ENCODE measurements at regions of chr15 and their contacts with region 1.

Region 1: DNA sequence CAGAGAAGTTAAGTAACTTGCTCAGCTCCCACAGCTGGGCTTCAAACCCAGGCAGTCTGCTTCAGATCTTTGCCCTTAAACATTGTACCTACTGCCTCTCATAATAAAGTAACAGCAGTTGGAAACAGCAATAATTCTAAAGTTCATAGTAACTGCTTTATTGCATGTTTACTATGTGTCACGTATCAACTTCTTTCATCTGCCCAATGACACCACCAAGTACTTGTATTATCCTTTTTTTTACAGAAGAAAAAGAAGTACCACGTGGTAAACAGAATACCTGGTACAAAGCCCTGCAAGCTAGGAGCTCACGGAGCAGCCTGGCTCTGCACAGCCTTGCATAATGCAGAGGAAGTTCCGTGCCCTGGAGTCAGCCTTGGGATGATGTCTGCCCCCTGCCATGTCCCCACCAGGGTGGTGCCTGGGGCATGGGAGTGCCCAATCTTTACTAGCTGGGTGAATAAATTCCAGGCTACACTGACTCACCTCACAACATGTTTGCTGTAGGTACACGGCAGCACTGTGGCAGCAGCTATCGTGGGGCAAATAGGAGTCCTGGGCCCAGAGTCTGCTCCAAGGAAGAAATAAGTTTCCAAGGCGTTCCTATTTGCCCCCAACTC is 77.2 kb downstream of the LDHAL6B start:
- DNase-seq: peak; percentile 96
- H3K4me3 Mint-ChIP-seq: peak overlapping the region; percentile 49
- H3K27ac Mint-ChIP-seq: peak overlapping the region; percentile 97
- H3K4me1 Mint-ChIP-seq: peaks cover 34% of the 10 kb centered on the region
- H3K27me3 Mint-ChIP-seq: no peaks in the 10 kb centered on the region
- CTCF ChIP-seq: no peak

Region 2: GRCh38 chr15:59169251-59169708 is 114.5 kb before region 1 on chr15:
- CTCF ChIA-PET with region 1: interaction called, 4 read pairs
- POLR2A ChIA-PET with region 1: interaction called, 12 read pairs
- intact Hi-C with region 1: no loop called
- DNase-seq: peak; percentile 76
- H3K4me3 Mint-ChIP-seq: peak overlapping the region; percentile 10
- H3K27ac Mint-ChIP-seq: peak overlapping the region; percentile 98
- H3K4me1 Mint-ChIP-seq: peaks cover 51% of the 10 kb centered on the region
- H3K27me3 Mint-ChIP-seq: no peaks in the 10 kb centered on the region
- CTCF ChIP-seq: no peak

Region 3: GRCh38 chr15:59268168-59268979 is 15.5 kb before region 1 on chr15:
- CTCF ChIA-PET with region 1: interaction called, 3 read pairs
- POLR2A ChIA-PET with region 1: interaction called, 12 read pairs
- intact Hi-C with region 1: no loop called
- DNase-seq: peak; percentile 39
- H3K4me3 Mint-ChIP-seq: no peak overlapping the region
- H3K27ac Mint-ChIP-seq: peak overlapping the region; percentile 63
- H3K4me1 Mint-ChIP-seq: peaks cover 19% of the 10 kb centered on the region
- H3K27me3 Mint-ChIP-seq: no peaks in the 10 kb centered on the region
- CTCF ChIP-seq: no peak

Region 4: GRCh38 chr15:59299929-59300617 is 16.2 kb after region 1 on chr15:
- CTCF ChIA-PET with region 1: interaction called, 26 read pairs
- POLR2A ChIA-PET with region 1: interaction called, 120 read pairs
- intact Hi-C with region 1: loop called (anchors 1 kb)
- DNase-seq: peak; percentile 99
- H3K4me3 Mint-ChIP-seq: peak overlapping the region; percentile 51
- H3K27ac Mint-ChIP-seq: peak overlapping the region; percentile 69
- H3K4me1 Mint-ChIP-seq: peaks cover 40% of the 10 kb centered on the region
- H3K27me3 Mint-ChIP-seq: no peaks in the 10 kb centered on the region
- CTCF ChIP-seq: no peak

Region 5: GRCh38 chr15:59306520-59307164 is 22.8 kb after region 1 on chr15:
- CTCF ChIA-PET with region 1: interaction called, 4 read pairs
- POLR2A ChIA-PET with region 1: interaction called, 24 read pairs
- intact Hi-C with region 1: no loop called
- DNase-seq: peak; percentile 89
- H3K4me3 Mint-ChIP-seq: no peak overlapping the region
- H3K27ac Mint-ChIP-seq: no peak overlapping the region
- H3K4me1 Mint-ChIP-seq: peaks cover 28% of the 10 kb centered on the region
- H3K27me3 Mint-ChIP-seq: no peaks in the 10 kb centered on the region
- CTCF ChIP-seq: no peak

Region 6: GRCh38 chr15:59339252-59339672 is 55.4 kb after region 1 on chr15:
- CTCF ChIA-PET with region 1: interaction called, 3 read pairs
- POLR2A ChIA-PET with region 1: interaction called, 16 read pairs
- intact Hi-C with region 1: no loop called
- DNase-seq: peak; percentile 89
- H3K4me3 Mint-ChIP-seq: peak overlapping the region; percentile 52
- H3K27ac Mint-ChIP-seq: peak overlapping the region; percentile 92
- H3K4me1 Mint-ChIP-seq: peaks cover 25% of the 10 kb centered on the region
- H3K27me3 Mint-ChIP-seq: no peaks in the 10 kb centered on the region
- CTCF ChIP-seq: no peak

Region 7: GRCh38 chr15:59349680-59350420 is 66.0 kb after region 1 on chr15:
- CTCF ChIA-PET with region 1: interaction called, 5 read pairs
- POLR2A ChIA-PET with region 1: interaction called, 11 read pairs
- intact Hi-C with region 1: no loop called
- DNase-seq: peak; percentile 94
- H3K4me3 Mint-ChIP-seq: peak overlapping the region; percentile 42
- H3K27ac Mint-ChIP-seq: peak overlapping the region; percentile 92
- H3K4me1 Mint-ChIP-seq: peaks cover 33% of the 10 kb centered on the region
- H3K27me3 Mint-ChIP-seq: no peaks in the 10 kb centered on the region
- CTCF ChIP-seq: no peak

Region 8: GRCh38 chr15:59437817-59438562 is 154.2 kb after region 1 on chr15 and contains the start of gene FAM81A:
- CTCF ChIA-PET with region 1: no interaction called
- POLR2A ChIA-PET with region 1: no interaction called
- intact Hi-C with region 1: no loop called
- DNase-seq: peak; percentile 71
- H3K4me3 Mint-ChIP-seq: peak within 1 kb of the TSS; percentile 73
- H3K27ac Mint-ChIP-seq: no peak within 1 kb of the TSS
- H3K4me1 Mint-ChIP-seq: no peaks in the 10 kb centered on the region
- H3K27me3 Mint-ChIP-seq: no peaks in the 10 kb centered on the region
- CTCF ChIP-seq: no peak
- total RNA-seq, gene FAM81A: 1.1 TPM in 2 replicates

Measured in MCF 10A (cell line).